Panc1 (cell line): ENCODE measurements at regions of chr3 and their contacts with region 1.

Region 1: DNA sequence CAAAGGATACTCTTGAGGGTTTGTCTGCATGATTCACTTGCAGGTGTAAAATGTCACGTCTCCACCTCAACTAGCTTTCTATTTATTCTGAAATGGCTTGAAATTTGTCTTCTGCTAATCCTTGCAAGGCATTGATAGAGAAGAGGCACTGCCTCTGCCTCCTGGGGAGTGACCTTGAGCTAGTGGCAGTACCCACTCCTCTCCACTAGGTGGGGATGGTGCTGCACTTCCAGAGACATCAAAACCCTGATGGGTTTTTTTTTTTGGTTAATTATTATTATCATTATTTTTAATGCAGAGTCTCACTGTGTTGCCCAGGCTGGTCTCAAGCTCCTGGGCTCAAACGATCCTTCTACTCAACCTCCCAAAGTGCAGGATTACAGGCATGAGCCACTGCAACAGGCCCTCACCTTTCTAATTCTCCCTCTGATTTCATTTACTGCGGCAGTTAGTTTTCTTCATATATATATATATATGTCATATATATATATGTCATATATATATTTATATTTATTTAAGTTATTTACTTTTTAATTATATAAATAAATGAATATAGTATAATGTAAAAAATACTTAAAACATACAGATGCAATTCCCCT is 117.6 kb upstream of the EIF1B start:
- DNase-seq: peak; percentile 35
- ATAC-seq: peak; percentile 69; the same call in 1 of the 2 replicates
- H3K4me3 ChIP-seq: no peak overlapping the region
- H3K27ac ChIP-seq: no peak overlapping the region
- H3K4me1 ChIP-seq: no peaks in the 10 kb centered on the region
- H3K27me3 ChIP-seq: no peaks in the 10 kb centered on the region
- CTCF ChIP-seq: peak; percentile 83

Region 2: GRCh38 chr3:40096661-40097111 is 95.3 kb before region 1 on chr3:
- CTCF ChIA-PET with region 1: no interaction called
- POLR2A ChIA-PET with region 1: no interaction called
- in situ Hi-C with region 1: no loop called
- intact Hi-C with region 1: no loop called
- DNase-seq: no peak
- ATAC-seq: no peak
- H3K4me3 ChIP-seq: no peak overlapping the region
- H3K27ac ChIP-seq: no peak overlapping the region
- H3K4me1 ChIP-seq: no peaks in the 10 kb centered on the region
- H3K27me3 ChIP-seq: no peaks in the 10 kb centered on the region
- CTCF ChIP-seq: no peak

Region 3: GRCh38 chr3:40317061-40317855 is 125.3 kb after region 1 on chr3:
- CTCF ChIA-PET with region 1: interaction called, 9 read pairs
- POLR2A ChIA-PET with region 1: no interaction called
- in situ Hi-C with region 1: no loop called
- intact Hi-C with region 1: loop called (anchors 1 kb)
- DNase-seq: peak; percentile 39
- ATAC-seq: peak; percentile 85
- H3K4me3 ChIP-seq: no peak overlapping the region
- H3K27ac ChIP-seq: no peak overlapping the region
- H3K4me1 ChIP-seq: no peaks in the 10 kb centered on the region
- H3K27me3 ChIP-seq: no peaks in the 10 kb centered on the region
- CTCF ChIP-seq: peak; percentile 78